ENCODE measurements at regions of chr3 and their contacts with region 1.

Region 1: DNA sequence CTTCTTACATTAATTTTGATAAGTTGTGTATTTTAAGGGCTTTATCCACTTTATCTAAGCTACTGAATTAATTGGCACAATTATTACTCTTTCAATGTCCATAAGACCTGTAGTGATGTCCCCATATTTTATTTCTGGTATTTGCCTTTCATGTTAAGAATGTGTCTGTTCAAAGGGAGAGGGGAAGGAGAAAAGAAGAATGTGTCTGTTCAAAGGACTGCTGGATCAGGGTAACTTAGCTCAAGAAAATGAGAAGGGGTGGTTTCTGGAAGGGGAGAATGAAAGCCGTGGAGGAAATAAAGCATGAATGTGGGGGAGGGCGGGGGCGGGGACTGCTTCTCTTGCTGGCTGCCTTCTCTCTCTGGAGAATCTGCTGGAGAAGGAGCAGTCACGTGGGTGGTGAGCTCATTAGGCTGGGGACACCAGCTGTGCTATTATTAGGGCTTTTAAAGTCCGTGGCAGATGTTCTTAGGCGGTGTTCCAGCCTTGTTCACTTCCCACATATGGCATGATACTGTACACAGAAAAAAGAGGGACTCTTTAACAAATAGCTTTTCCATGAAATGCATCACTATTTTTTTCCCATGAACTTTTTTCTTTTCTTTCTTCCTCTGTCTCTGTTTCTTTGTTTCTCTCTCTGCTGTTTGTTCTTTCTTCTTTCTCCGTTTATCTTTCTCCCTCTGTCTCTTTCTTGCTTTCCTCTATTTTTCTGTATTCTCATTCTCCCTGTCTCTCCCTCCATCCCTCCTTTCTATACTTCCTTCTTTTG is 63.7 kb upstream of the ULK4 start:
- DNase-seq: no peak
- ATAC-seq: peak; percentile 70
- H3K4me3 ChIP-seq: peak overlapping the region; percentile 61
- H3K27ac ChIP-seq: peak overlapping the region; percentile 67
- H3K4me1 ChIP-seq: peaks cover 20% of the 10 kb centered on the region
- H3K27me3 ChIP-seq: no peaks in the 10 kb centered on the region
- CTCF ChIP-seq: no peak
- EP300 ChIP-seq: no peak
- POLR2A ChIP-seq: no peak
- RAD21 ChIP-seq: no peak

Region 2: DNA sequence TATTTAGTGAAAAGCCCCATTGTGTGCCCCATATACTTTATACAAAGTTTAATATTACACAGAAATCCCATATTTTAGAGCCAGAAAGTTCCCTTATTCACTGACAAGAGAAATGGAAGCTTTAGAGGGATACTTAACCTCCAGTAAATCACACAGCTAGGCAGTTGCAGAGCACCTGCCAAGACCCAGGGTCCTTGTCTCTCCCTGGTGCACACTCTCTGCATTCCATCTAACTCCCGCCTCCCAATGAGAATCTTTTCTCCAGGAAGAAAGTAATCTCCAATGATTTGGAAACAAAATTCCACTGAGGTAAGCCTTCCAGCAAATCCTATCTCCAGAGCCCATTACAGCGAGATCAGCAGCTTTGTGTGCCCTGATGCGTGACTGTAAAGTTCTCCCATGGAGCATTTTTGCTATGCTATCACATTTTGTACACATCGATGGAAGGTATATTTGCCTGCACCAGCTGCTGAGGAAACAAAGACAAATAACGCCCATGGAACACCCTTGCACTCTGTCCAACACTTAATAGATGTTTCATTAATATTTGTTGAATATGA is 105.1 kb before region 1 on chr3:
- CTCF ChIA-PET with region 1: no interaction called
- POLR2A ChIA-PET with region 1: no interaction called
- RAD21 ChIA-PET with region 1: no interaction called
- SMC1A ChIA-PET with region 1: no interaction called
- in situ Hi-C with region 1: no loop called
- intact Hi-C with region 1: no loop called
- DNase-seq: no peak
- ATAC-seq: no peak
- H3K4me3 ChIP-seq: no peak overlapping the region
- H3K27ac ChIP-seq: no peak overlapping the region
- H3K4me1 ChIP-seq: no peaks in the 10 kb centered on the region
- H3K27me3 ChIP-seq: no peaks in the 10 kb centered on the region
- CTCF ChIP-seq: no peak
- EP300 ChIP-seq: no peak
- POLR2A ChIP-seq: no peak
- RAD21 ChIP-seq: no peak

Region 3: GRCh38 chr3:42036483-42036823 is 10.9 kb after region 1 on chr3:
- CTCF ChIA-PET with region 1: interaction called, 5 read pairs
- POLR2A ChIA-PET with region 1: interaction called, 6 read pairs
- RAD21 ChIA-PET with region 1: interaction called, 9 read pairs
- SMC1A ChIA-PET with region 1: interaction called, 17 read pairs
- in situ Hi-C with region 1: no loop called
- intact Hi-C with region 1: no loop called
- DNase-seq: no peak
- ATAC-seq: peak; percentile 66
- H3K4me3 ChIP-seq: peak overlapping the region; percentile 22; the same call in 1 of the 2 replicates
- H3K27ac ChIP-seq: peak overlapping the region; percentile 57
- H3K4me1 ChIP-seq: peaks cover 35% of the 10 kb centered on the region
- H3K27me3 ChIP-seq: no peaks in the 10 kb centered on the region
- CTCF ChIP-seq: no peak
- EP300 ChIP-seq: no peak
- POLR2A ChIP-seq: no peak
- RAD21 ChIP-seq: no peak

Region 4: DNA sequence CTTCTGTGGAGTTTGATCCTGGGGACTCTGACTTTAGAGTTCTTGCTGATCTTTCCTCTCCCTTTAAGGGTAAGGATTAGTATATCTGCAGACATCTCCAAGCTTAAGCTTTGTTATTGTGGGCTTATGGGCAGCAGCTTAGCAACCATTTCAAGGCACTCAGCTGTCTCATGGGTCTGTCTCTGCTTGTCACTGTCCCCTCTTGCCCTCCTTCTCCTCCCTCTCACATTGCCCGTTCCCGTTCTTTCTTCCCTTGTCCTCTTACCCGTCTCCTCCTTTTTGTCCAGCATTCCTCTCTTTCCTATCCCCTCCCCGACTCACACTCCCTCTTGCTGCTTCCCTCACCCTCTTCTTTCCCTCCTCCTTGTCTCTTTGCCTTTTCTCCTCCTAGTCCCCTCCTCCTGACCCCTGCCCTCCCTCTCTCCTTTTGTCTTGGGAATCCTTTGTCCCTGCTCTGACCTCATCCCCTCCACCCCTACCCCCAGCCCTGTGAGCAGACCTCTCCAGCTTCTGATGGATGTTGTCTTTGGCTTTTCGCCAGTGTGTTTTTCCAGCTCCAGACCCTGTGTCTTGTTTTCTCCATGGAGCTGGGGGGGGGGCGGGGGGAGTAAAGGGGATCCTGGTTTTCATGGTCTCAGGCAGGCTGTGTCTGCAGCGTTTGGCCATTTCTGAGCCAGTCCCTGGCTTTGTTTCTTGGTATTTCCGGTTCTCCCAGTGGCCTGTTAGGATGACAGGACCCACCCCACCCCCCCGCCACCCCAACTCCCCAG is 17.7 kb after region 1 on chr3:
- CTCF ChIA-PET with region 1: interaction called, 9 read pairs
- POLR2A ChIA-PET with region 1: interaction called, 26 read pairs
- RAD21 ChIA-PET with region 1: interaction called, 11 read pairs
- SMC1A ChIA-PET with region 1: interaction called, 109 read pairs
- in situ Hi-C with region 1: no loop called
- intact Hi-C with region 1: no loop called
- DNase-seq: no peak
- ATAC-seq: peak; percentile 62
- H3K4me3 ChIP-seq: no peak overlapping the region
- H3K27ac ChIP-seq: no peak overlapping the region
- H3K4me1 ChIP-seq: peaks cover 49% of the 10 kb centered on the region
- H3K27me3 ChIP-seq: no peaks in the 10 kb centered on the region
- CTCF ChIP-seq: no peak
- EP300 ChIP-seq: no peak
- POLR2A ChIP-seq: no peak
- RAD21 ChIP-seq: no peak

Region 5: GRCh38 chr3:42052484-42053351 is 27.2 kb after region 1 on chr3:
- CTCF ChIA-PET with region 1: interaction called, 5 read pairs
- POLR2A ChIA-PET with region 1: interaction called, 26 read pairs
- RAD21 ChIA-PET with region 1: interaction called, 4 read pairs
- SMC1A ChIA-PET with region 1: interaction called, 109 read pairs
- in situ Hi-C with region 1: no loop called
- intact Hi-C with region 1: no loop called
- DNase-seq: no peak
- ATAC-seq: no peak
- H3K4me3 ChIP-seq: no peak overlapping the region
- H3K27ac ChIP-seq: peak overlapping the region; percentile 57
- H3K4me1 ChIP-seq: peaks cover 38% of the 10 kb centered on the region
- H3K27me3 ChIP-seq: no peaks in the 10 kb centered on the region
- CTCF ChIP-seq: no peak
- EP300 ChIP-seq: no peak
- POLR2A ChIP-seq: no peak
- RAD21 ChIP-seq: no peak

Region 6: GRCh38 chr3:42067326-42067725 is 41.8 kb after region 1 on chr3:
- CTCF ChIA-PET with region 1: no interaction called
- POLR2A ChIA-PET with region 1: interaction called, 4 read pairs
- RAD21 ChIA-PET with region 1: interaction called, 5 read pairs
- SMC1A ChIA-PET with region 1: interaction called, 17 read pairs
- in situ Hi-C with region 1: no loop called
- intact Hi-C with region 1: no loop called
- DNase-seq: peak; percentile 86
- ATAC-seq: peak; percentile 91
- H3K4me3 ChIP-seq: peak overlapping the region; percentile 48; the same call in 1 of the 2 replicates
- H3K27ac ChIP-seq: peak overlapping the region; percentile 86
- H3K4me1 ChIP-seq: peaks cover 35% of the 10 kb centered on the region
- H3K27me3 ChIP-seq: no peaks in the 10 kb centered on the region
- CTCF ChIP-seq: no peak
- EP300 ChIP-seq: peak; percentile 51 to 91; a peak in 3 of 4 replicates
- POLR2A ChIP-seq: no peak
- RAD21 ChIP-seq: no peak

Region 7: GRCh38 chr3:42090973-42091731 is 65.6 kb after region 1 on chr3 and contains the start of gene TRAK1:
- CTCF ChIA-PET with region 1: no interaction called
- POLR2A ChIA-PET with region 1: interaction called, 6 read pairs
- RAD21 ChIA-PET with region 1: interaction called, 4 read pairs
- SMC1A ChIA-PET with region 1: interaction called, 15 read pairs
- in situ Hi-C with region 1: no loop called
- intact Hi-C with region 1: no loop called
- DNase-seq: no peak
- ATAC-seq: no peak
- H3K4me3 ChIP-seq: peak within 1 kb of the TSS; percentile 23; the same call in 1 of the 2 replicates
- H3K27ac ChIP-seq: peak within 1 kb of the TSS; percentile 63
- H3K4me1 ChIP-seq: peaks cover 79% of the 10 kb centered on the region
- H3K27me3 ChIP-seq: no peaks in the 10 kb centered on the region
- CTCF ChIP-seq: no peak
- EP300 ChIP-seq: no peak
- POLR2A ChIP-seq: no peak
- RAD21 ChIP-seq: no peak
- polyA plus RNA-seq, gene TRAK1: 6.6 to 6.7 TPM

Measured in GM12878 (cell line).